Activated CD4-positive, alpha-beta memory T cell treated with anti-CD3 and anti-CD28 coated beads, Interleukin-2, amount 10 ng/mL, durations not matched to agents 7 days and 5 days (primary cell): ENCODE measurements at regions of chr7 and their contacts with region 1.

Region 1: DNA sequence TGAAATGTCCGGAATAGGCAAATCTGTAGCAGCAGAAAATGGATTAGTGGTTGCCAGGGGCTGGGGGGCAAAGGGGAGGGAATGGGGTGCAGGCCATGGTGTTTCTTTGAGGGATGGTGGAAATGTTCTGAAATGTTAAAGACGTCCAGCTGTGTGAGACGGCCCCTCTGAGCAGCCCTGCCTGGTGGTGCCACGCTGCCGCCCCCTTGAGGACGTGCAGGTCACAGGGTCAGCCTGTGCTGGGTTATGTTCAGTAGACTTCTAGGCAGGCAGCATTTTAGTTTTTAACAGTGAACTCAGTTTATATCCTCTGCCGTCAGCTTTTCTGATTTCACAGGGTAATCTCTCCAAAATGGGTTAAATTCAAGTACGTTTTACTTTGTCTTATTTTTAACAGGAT is 9.4 kb downstream of the NUB1 start:
- DNase-seq: peak; percentile 57
- H3K4me3 Mint-ChIP-seq: peak overlapping the region; percentile 69
- H3K27ac Mint-ChIP-seq: peak overlapping the region; percentile 95
- H3K4me1 Mint-ChIP-seq: peaks cover 57% of the 10 kb centered on the region
- H3K27me3 Mint-ChIP-seq: no peaks in the 10 kb centered on the region

Region 2: GRCh38 chr7:151320263-151320845 is 30.7 kb before region 1 on chr7:
- CTCF ChIA-PET with region 1: interaction called, 143 read pairs
- POLR2A ChIA-PET with region 1: interaction called, 20 read pairs
- DNase-seq: no peak
- H3K4me3 Mint-ChIP-seq: no peak overlapping the region
- H3K27ac Mint-ChIP-seq: no peak overlapping the region
- H3K4me1 Mint-ChIP-seq: peaks cover 5% of the 10 kb centered on the region
- H3K27me3 Mint-ChIP-seq: peaks cover 6% of the 10 kb centered on the region

Region 3: GRCh38 chr7:151368136-151368571 is 17.1 kb after region 1 on chr7:
- CTCF ChIA-PET with region 1: interaction called, 42 read pairs
- POLR2A ChIA-PET with region 1: interaction called, 3 read pairs
- DNase-seq: peak; percentile 77
- H3K4me3 Mint-ChIP-seq: no peak overlapping the region
- H3K27ac Mint-ChIP-seq: no peak overlapping the region
- H3K4me1 Mint-ChIP-seq: peaks cover 11% of the 10 kb centered on the region
- H3K27me3 Mint-ChIP-seq: no peaks in the 10 kb centered on the region